Activated B cell treated with CpG ODN at 0.5 μM for 24 hours (primary cell): ENCODE measurements at regions of chr1 and their contacts with region 1.

Region 1: GRCh38 chr1:36217670-36218069 is 6.6 kb upstream of the THRAP3 start:
- DNase-seq: no peak
- ATAC-seq: no peak
- H3K4me3 Mint-ChIP-seq: no peak overlapping the region
- H3K27ac Mint-ChIP-seq: no peak overlapping the region
- H3K4me1 Mint-ChIP-seq: peaks cover 5% of the 10 kb centered on the region
- H3K27me3 Mint-ChIP-seq: no peaks in the 10 kb centered on the region
- CTCF ChIP-seq: no peak

Region 2: DNA sequence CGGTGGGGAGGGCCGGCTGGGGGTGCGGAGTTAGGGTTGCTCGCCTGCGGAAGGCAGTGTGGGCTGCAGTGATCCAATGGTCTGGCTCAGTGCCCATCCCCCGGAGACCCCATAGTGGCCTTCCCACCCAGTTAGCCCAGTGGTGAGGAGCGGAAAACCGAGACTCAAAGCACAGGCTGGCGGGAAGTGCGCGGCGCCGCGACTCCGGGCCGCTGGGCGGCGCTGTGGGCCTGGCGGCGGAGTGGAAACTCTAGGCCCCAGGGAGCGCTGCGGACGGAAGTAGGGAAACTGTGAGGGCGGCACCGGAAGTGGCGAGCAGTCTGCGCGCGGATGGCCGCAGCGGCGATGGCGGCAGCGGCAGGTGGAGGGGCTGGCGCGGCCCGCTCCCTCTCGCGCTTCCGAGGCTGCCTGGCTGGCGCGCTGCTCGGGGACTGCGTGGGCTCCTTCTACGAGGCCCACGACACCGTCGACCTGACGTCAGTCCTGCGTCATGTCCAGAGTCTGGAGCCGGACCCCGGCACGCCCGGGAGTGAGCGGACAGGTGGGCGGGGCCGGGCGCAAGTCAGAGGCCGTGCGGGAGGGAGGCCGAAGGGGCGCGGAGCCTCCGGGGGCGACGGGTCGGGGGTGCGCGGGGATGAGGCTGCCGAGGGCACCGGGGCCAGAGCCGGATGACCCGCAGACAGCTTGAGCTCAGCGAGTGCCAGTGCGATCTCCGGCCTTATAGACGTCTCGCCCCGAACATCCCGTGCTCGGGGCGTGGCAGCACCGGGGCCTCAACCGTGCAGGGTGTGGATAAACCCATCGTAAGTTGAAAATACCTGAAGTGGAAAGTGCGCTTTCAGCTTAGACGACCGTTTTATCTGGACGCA is 128.9 kb before region 1 on chr1 and contains the start of gene ADPRS:
- CTCF ChIA-PET with region 1: no interaction called
- POLR2A ChIA-PET with region 1: no interaction called
- intact Hi-C with region 1: no loop called
- DNase-seq: peak; percentile 90
- ATAC-seq: peak; percentile 85
- H3K4me3 Mint-ChIP-seq: peak within 1 kb of the TSS; percentile 89
- H3K27ac Mint-ChIP-seq: peak within 1 kb of the TSS; percentile 88
- H3K4me1 Mint-ChIP-seq: peaks cover 17% of the 10 kb centered on the region
- H3K27me3 Mint-ChIP-seq: peaks cover 18% of the 10 kb centered on the region
- CTCF ChIP-seq: no peak
- total RNA-seq, gene ADPRS: 23.0 and 23.9 TPM in 2 replicates

Region 3: DNA sequence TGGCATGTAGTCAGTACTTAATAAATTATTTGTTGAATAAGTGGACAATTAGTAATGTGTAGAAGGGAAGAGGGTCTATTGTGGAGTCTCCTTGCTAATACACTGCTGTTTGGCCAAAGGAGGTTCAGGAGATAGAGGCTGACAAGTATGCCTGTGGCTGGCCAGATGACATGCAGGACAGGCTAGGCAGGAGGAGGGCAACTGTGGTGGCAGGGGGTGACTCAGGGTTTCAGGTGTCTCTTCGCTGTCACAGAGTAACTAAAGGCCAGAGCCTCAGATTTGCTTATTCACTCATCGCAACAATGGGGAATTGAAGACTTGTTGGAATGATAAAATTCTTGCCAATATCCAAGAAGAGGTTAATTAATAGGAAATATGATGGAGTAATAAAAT is 39.7 kb after region 1 on chr1:
- CTCF ChIA-PET with region 1: no interaction called
- POLR2A ChIA-PET with region 1: no interaction called
- intact Hi-C with region 1: no loop called
- DNase-seq: no peak
- ATAC-seq: peak; percentile 65
- H3K4me3 Mint-ChIP-seq: peak overlapping the region; percentile 42
- H3K27ac Mint-ChIP-seq: peak overlapping the region; percentile 86
- H3K4me1 Mint-ChIP-seq: peaks cover 67% of the 10 kb centered on the region
- H3K27me3 Mint-ChIP-seq: no peaks in the 10 kb centered on the region
- CTCF ChIP-seq: no peak

Region 4: GRCh38 chr1:36628804-36629203 is 411.1 kb after region 1 on chr1:
- CTCF ChIA-PET with region 1: no interaction called
- POLR2A ChIA-PET with region 1: interaction called, 11 read pairs
- intact Hi-C with region 1: no loop called
- DNase-seq: no peak
- ATAC-seq: no peak
- H3K4me3 Mint-ChIP-seq: no peak overlapping the region
- H3K27ac Mint-ChIP-seq: no peak overlapping the region
- H3K4me1 Mint-ChIP-seq: no peaks in the 10 kb centered on the region
- H3K27me3 Mint-ChIP-seq: peaks cover 12% of the 10 kb centered on the region
- CTCF ChIP-seq: no peak

Region 5: DNA sequence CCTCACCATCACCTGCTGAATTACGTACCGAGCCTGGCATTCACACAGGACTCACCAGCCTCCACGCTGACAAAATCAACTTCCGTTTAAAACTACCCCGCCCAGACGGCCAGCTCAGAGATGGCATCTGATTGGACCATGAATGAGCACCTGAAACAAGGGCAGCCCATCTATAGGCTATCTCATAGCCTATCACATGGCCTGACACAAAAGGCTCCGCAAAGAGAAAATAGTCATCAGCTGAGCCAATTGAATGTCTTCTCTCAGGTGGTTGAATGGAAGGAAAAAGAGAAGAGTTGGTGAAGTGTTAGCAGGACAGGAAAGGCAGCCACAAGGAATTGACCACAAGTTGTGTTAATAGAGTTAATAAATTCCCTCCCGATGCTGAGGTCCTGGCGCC is 1206.1 kb after region 1 on chr1:
- CTCF ChIA-PET with region 1: no interaction called
- POLR2A ChIA-PET with region 1: no interaction called
- intact Hi-C with region 1: no loop called
- DNase-seq: no peak
- ATAC-seq: no peak
- H3K4me3 Mint-ChIP-seq: no peak overlapping the region
- H3K27ac Mint-ChIP-seq: no peak overlapping the region
- H3K4me1 Mint-ChIP-seq: no peaks in the 10 kb centered on the region
- H3K27me3 Mint-ChIP-seq: peaks cover 15% of the 10 kb centered on the region
- CTCF ChIP-seq: no peak